CD8-positive, alpha-beta T cell (primary cell): ENCODE measurements at regions of chr2 and their contacts with region 1.

Region 1: DNA sequence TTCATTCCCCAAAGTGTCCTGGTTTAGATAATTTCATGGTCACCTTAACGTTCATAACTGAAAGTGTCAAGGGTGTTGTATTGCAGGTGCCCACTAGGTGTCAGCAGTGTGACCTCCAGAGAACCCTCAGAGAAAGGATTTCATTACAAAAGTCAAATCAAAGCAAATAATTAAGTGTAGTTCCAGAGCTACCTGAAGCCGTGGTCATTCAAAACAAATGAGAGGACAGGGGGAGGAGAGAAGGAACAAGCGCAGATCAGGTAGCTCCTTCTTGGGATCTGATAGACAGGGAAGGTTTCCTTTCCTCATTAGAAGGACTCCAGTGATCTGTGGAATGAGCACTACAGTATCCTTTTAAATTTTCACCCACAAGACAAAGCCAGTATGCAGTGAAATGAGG is at the start of gene SLC9A4:
- DNase-seq: peak; percentile 15 to 64 (median 48)
- ATAC-seq: no peak
- H3K4me3 ChIP-seq: no peak within 1 kb of the TSS
- H3K4me3 Mint-ChIP-seq: no peak within 1 kb of the TSS
- H3K27ac ChIP-seq: no peak within 1 kb of the TSS
- H3K27ac Mint-ChIP-seq: no peak within 1 kb of the TSS
- H3K4me1 ChIP-seq: no peaks in the 10 kb centered on the region
- H3K4me1 Mint-ChIP-seq: no peaks in the 10 kb centered on the region
- H3K27me3 ChIP-seq: no peaks in the 10 kb centered on the region
- H3K27me3 Mint-ChIP-seq: peaks cover 22% of the 10 kb centered on the region
- CTCF ChIP-seq: peak; percentile 84
- total RNA-seq, gene SLC9A4: not detected

Region 2: DNA sequence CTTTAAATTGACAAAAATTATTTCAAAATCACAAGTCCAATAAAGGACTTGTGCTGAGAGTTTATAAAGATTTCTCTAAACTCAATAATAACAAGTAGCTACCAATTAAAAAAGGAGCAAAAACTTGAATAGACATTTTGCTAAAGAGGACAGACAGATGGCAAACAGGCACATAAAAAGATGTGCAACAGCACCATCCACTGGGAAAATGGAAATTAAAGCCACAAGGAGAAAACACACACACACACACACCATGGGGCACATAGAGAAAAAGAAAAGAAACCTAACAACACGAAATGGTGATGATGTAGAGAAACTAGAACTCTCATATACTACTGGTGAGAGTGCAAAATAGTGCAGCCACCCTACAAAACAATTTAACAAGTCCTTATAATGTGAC is 12.6 kb before region 1 on chr2:
- CTCF ChIA-PET with region 1: interaction called, 22 read pairs
- POLR2A ChIA-PET with region 1: interaction called, 4 read pairs
- intact Hi-C with region 1: no loop called
- DNase-seq: no peak
- ATAC-seq: no peak
- H3K4me3 ChIP-seq: no peak overlapping the region
- H3K4me3 Mint-ChIP-seq: no peak overlapping the region
- H3K27ac ChIP-seq: no peak overlapping the region
- H3K27ac Mint-ChIP-seq: no peak overlapping the region
- H3K4me1 ChIP-seq: no peaks in the 10 kb centered on the region
- H3K4me1 Mint-ChIP-seq: no peaks in the 10 kb centered on the region
- H3K27me3 ChIP-seq: no peaks in the 10 kb centered on the region
- H3K27me3 Mint-ChIP-seq: peaks cover 5% of the 10 kb centered on the region
- CTCF ChIP-seq: no peak

Region 3: GRCh38 chr2:102487761-102488466 is 14.9 kb after region 1 on chr2:
- CTCF ChIA-PET with region 1: interaction called, 26 read pairs
- POLR2A ChIA-PET with region 1: no interaction called
- intact Hi-C with region 1: no loop called
- DNase-seq: no peak
- ATAC-seq: no peak
- H3K4me3 ChIP-seq: no peak overlapping the region
- H3K4me3 Mint-ChIP-seq: no peak overlapping the region
- H3K27ac ChIP-seq: no peak overlapping the region
- H3K27ac Mint-ChIP-seq: no peak overlapping the region
- H3K4me1 ChIP-seq: no peaks in the 10 kb centered on the region
- H3K4me1 Mint-ChIP-seq: peaks cover 9% of the 10 kb centered on the region
- H3K27me3 ChIP-seq: no peaks in the 10 kb centered on the region
- H3K27me3 Mint-ChIP-seq: peaks cover 10% of the 10 kb centered on the region
- CTCF ChIP-seq: no peak

Region 4: DNA sequence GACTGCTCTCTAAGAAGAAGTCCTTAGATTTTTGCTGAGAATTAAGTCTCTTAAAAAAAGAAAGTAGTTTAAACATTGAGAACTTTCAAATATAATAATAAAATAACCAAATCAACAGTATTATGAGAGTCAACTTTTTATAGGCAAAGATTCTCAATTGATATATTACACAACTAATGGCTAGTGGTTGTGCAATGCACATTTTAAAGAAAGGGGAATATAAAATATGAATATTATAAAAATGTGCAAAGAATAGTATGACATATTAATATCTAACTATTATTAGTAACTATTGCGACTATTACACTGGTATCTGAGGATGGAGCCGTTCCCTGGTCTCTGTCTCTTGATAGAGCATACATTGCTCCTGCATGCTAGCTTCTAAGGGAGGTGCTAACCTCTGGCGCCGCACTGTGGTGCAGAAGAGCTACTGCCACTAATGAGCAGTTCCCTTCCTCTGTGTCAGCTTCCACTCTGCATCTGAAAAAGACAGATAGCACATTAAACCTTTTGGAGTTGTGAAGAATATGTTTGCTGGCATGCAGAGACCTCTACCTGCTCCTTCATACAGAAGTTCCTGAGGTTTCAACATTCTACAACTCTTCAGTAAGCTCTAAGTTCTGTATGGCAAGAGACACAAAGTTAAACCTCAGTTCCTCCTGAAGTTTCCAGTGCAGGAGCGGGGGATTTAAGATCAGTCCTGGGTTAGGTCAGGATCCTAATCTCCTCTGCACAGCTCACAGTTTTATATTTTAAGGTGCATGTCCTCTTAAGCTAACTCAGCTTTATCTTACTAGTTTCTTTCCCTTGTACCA is 142.8 kb after region 1 on chr2:
- CTCF ChIA-PET with region 1: interaction called, 12 read pairs
- POLR2A ChIA-PET with region 1: no interaction called
- intact Hi-C with region 1: loop called (anchors 1 to 5 kb)
- DNase-seq: peak in 6 of 9 experiments; percentile 26 to 61 (median 33)
- ATAC-seq: peak; percentile 63
- H3K4me3 ChIP-seq: no peak overlapping the region
- H3K4me3 Mint-ChIP-seq: no peak overlapping the region
- H3K27ac ChIP-seq: no peak overlapping the region
- H3K27ac Mint-ChIP-seq: no peak overlapping the region
- H3K4me1 ChIP-seq: peaks cover 3% of the 10 kb centered on the region
- H3K4me1 Mint-ChIP-seq: peaks cover 13% of the 10 kb centered on the region
- H3K27me3 ChIP-seq: peaks cover 0 to 5% of the 10 kb centered on the region in 2 experiments
- H3K27me3 Mint-ChIP-seq: peaks cover 29% of the 10 kb centered on the region
- CTCF ChIP-seq: peak; percentile 52

Region 5: GRCh38 chr2:102703748-102704147 is 230.7 kb after region 1 on chr2:
- CTCF ChIA-PET with region 1: interaction called, 25 read pairs
- POLR2A ChIA-PET with region 1: no interaction called
- intact Hi-C with region 1: loop called (anchors 1 to 2 kb)
- DNase-seq: peak in 2 of 9 experiments; percentile 12 to 28
- ATAC-seq: no peak
- H3K4me3 ChIP-seq: no peak overlapping the region
- H3K4me3 Mint-ChIP-seq: no peak overlapping the region
- H3K27ac ChIP-seq: no peak overlapping the region
- H3K27ac Mint-ChIP-seq: no peak overlapping the region
- H3K4me1 ChIP-seq: no peaks in the 10 kb centered on the region
- H3K4me1 Mint-ChIP-seq: no peaks in the 10 kb centered on the region
- H3K27me3 ChIP-seq: no peaks in the 10 kb centered on the region
- H3K27me3 Mint-ChIP-seq: peaks cover 8% of the 10 kb centered on the region
- CTCF ChIP-seq: no peak

Region 6: DNA sequence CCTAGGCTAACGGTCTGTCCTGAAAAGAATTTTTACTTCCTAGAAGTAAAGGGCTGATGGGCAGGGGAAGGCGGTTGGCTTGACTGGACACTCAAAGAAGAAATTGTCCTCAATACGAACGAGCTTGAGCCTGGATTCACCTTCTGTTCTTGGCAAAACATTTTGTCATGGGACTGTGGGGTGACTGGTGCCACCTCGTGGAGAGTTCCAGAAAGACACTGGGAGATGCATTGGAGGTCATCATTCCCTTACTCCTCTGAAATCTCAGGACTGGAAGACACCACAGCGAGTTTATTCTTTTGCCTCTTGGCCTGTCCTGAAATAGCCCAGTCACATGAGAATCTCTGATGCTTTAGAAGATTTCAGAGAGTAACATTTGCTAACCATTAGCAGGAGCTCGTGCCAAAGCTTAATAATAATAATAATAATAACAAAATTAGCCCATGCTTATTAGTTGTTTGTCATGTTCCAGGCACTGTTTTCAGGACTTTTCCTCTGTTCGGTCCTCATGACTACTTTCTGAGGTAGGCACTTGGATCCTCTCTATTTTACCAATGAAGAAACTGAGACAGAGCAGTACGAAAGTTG is 333.3 kb after region 1 on chr2:
- CTCF ChIA-PET with region 1: no interaction called
- POLR2A ChIA-PET with region 1: no interaction called
- intact Hi-C with region 1: loop called in 1 of 2 experiments (anchors 5 kb)
- DNase-seq: peak in 5 of 9 experiments; percentile 8 to 39 (median 22)
- ATAC-seq: no peak
- H3K4me3 ChIP-seq: no peak overlapping the region
- H3K4me3 Mint-ChIP-seq: no peak overlapping the region
- H3K27ac ChIP-seq: no peak overlapping the region
- H3K27ac Mint-ChIP-seq: no peak overlapping the region
- H3K4me1 ChIP-seq: peaks cover 14% of the 10 kb centered on the region
- H3K4me1 Mint-ChIP-seq: peaks cover 15% of the 10 kb centered on the region
- H3K27me3 ChIP-seq: no peaks in the 10 kb centered on the region
- H3K27me3 Mint-ChIP-seq: no peaks in the 10 kb centered on the region
- CTCF ChIP-seq: peak; percentile 48